ENCODE measurements at regions of chr6 and their contacts with region 1.

Region 1: GRCh38 chr6:137415127-137415833 is 78.9 kb downstream of the OLIG3 start:
- DNase-seq: peak; percentile 76
- ATAC-seq: peak; percentile 97
- H3K4me3 Mint-ChIP-seq: peak overlapping the region; percentile 72
- H3K27ac Mint-ChIP-seq: peak overlapping the region; percentile 58
- H3K4me1 Mint-ChIP-seq: peaks cover 8% of the 10 kb centered on the region
- H3K27me3 Mint-ChIP-seq: no peaks in the 10 kb centered on the region
- CTCF ChIP-seq: peak; percentile 78

Region 2: DNA sequence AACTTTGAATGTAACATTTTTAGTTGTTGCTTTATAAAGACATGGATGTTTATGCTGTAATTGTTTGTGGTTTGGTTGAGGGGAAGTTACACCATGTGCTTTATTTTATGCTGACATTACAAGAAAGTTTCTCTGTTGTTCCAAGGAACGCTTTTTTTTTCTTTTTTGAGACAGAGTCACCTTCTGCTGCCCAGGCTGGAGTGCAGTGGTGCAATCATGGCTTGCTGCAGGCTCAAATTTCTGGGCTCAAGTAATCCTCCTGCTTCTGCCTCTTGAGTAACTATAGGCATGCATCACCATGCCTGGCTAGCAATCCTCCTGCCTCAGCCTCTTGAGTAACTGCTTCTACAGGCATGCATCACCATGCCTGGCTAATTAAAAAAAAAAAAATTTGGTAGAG is 175.1 kb before region 1 on chr6:
- CTCF ChIA-PET with region 1: no interaction called
- POLR2A ChIA-PET with region 1: no interaction called
- intact Hi-C with region 1: no loop called
- DNase-seq: no peak
- ATAC-seq: no peak
- H3K4me3 Mint-ChIP-seq: no peak overlapping the region
- H3K27ac Mint-ChIP-seq: no peak overlapping the region
- H3K4me1 Mint-ChIP-seq: peaks cover 5% of the 10 kb centered on the region
- H3K27me3 Mint-ChIP-seq: no peaks in the 10 kb centered on the region
- CTCF ChIP-seq: no peak

Region 3: DNA sequence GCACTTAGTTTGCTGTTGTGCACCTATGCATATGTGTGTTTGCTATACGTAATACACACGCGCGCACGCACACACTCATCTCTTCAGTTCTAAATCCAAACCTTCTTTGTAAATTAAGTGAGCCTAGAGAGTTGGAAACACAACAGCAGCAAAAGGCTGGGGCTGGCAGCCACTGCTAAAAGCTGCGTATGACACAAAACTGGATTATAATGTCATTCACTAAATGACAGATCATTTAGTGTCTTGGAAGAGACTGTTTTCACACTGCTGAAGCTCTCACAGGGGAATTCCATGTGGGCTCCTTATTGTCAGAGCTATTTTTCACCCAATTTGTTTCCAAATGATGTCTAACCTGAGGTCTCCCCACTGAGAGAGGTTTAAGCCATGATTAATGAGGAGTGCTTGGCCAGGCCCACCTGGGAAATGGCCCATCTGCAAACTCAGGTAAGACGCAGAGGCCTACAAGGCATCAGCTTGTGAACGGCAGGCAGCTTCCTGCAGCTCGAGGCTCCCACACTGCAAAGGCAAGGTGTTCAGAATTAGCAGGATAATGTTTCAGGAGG is 15.3 kb before region 1 on chr6:
- CTCF ChIA-PET with region 1: interaction called, 19 read pairs
- POLR2A ChIA-PET with region 1: no interaction called
- intact Hi-C with region 1: no loop called
- DNase-seq: peak; percentile 17
- ATAC-seq: peak; percentile 67
- H3K4me3 Mint-ChIP-seq: no peak overlapping the region
- H3K27ac Mint-ChIP-seq: no peak overlapping the region
- H3K4me1 Mint-ChIP-seq: peaks cover 8% of the 10 kb centered on the region
- H3K27me3 Mint-ChIP-seq: no peaks in the 10 kb centered on the region
- CTCF ChIP-seq: no peak